ENCODE measurements at regions of chr3 and their contacts with region 1.

Region 1: GRCh38 chr3:126752303-126752842 is 48.3 kb downstream of the CHCHD6 start:
- DNase-seq: peak; percentile 63
- ATAC-seq: peak; percentile 98
- H3K4me3 ChIP-seq: no peak overlapping the region
- H3K27ac ChIP-seq: no peak overlapping the region
- H3K4me1 ChIP-seq: peaks cover 19% of the 10 kb centered on the region
- H3K27me3 ChIP-seq: no peaks in the 10 kb centered on the region; a peak in 1 of 5 replicates
- CTCF ChIP-seq: peak; percentile 97
- EP300 ChIP-seq: no peak
- POLR2A ChIP-seq: no peak
- RAD21 ChIP-seq: peak; percentile 92

Region 2: GRCh38 chr3:126494204-126494969 is 258.0 kb before region 1 on chr3:
- CTCF ChIA-PET with region 1: no interaction called
- POLR2A ChIA-PET with region 1: no interaction called
- in situ Hi-C with region 1: no loop called
- intact Hi-C with region 1: no loop called
- DNase-seq: no peak
- ATAC-seq: no peak
- H3K4me3 ChIP-seq: no peak overlapping the region
- H3K27ac ChIP-seq: no peak overlapping the region
- H3K4me1 ChIP-seq: peaks cover 28% of the 10 kb centered on the region
- H3K27me3 ChIP-seq: no peaks in the 10 kb centered on the region
- CTCF ChIP-seq: no peak
- EP300 ChIP-seq: no peak
- POLR2A ChIP-seq: no peak
- RAD21 ChIP-seq: no peak

Region 3: DNA sequence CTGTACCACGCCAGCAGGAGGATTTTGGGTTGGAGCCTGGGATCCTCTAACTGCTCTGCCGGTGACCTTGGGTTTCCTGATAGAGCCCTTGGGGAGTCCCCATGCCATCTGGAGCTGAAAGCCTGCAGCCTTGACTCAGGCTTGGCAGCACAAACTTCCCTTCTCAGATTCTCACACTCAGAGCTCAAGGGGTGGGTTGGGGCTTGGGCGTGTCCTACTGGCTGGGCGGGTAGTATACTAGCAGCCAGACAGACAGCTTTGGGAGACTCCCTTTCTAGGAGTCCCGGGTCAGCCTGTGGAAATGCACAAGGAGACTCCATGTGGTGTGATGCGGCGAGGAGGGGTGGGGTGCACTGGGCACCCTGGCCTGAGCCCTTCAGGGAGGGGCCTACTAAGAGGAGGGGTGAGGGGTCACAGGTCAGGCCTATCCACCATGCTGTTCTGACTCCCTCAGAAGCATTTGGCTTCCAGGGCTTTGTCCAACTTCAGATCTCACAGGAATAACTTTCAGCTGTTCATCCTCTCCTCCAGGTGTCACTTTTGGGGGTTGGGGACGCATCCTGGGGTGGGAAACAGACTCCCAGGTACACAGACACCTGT is 208.9 kb after region 1 on chr3:
- CTCF ChIA-PET with region 1: interaction called, 3 read pairs
- POLR2A ChIA-PET with region 1: no interaction called
- in situ Hi-C with region 1: loop called (anchors 5 kb)
- intact Hi-C with region 1: loop called (anchors 1 kb)
- DNase-seq: no peak
- ATAC-seq: no peak
- H3K4me3 ChIP-seq: no peak overlapping the region
- H3K27ac ChIP-seq: no peak overlapping the region
- H3K4me1 ChIP-seq: peaks cover 30% of the 10 kb centered on the region
- H3K27me3 ChIP-seq: no peaks in the 10 kb centered on the region
- CTCF ChIP-seq: no peak
- EP300 ChIP-seq: no peak
- POLR2A ChIP-seq: no peak
- RAD21 ChIP-seq: no peak

Region 4: GRCh38 chr3:126982471-126983175 is 230.2 kb after region 1 on chr3 and contains the start of gene PLXNA1:
- CTCF ChIA-PET with region 1: interaction called, 7 read pairs
- POLR2A ChIA-PET with region 1: no interaction called
- in situ Hi-C with region 1: no loop called
- intact Hi-C with region 1: loop called (anchors 2 kb)
- DNase-seq: peak; percentile 44
- ATAC-seq: peak; percentile 61
- H3K4me3 ChIP-seq: peak within 1 kb of the TSS; percentile 59 to 92 (median 81); a peak in 5 of 6 replicates
- H3K27ac ChIP-seq: peak within 1 kb of the TSS; percentile 55
- H3K4me1 ChIP-seq: peaks cover 39% of the 10 kb centered on the region
- H3K27me3 ChIP-seq: peaks cover 2 to 16% of the 10 kb centered on the region in 2 experiments; a peak in 3 of 5 replicates
- CTCF ChIP-seq: peak; percentile 91
- EP300 ChIP-seq: no peak
- POLR2A ChIP-seq: no peak
- RAD21 ChIP-seq: peak; percentile 81
- total RNA-seq, gene PLXNA1: 8.5 and 16.6 TPM in 2 replicates

Region 5: GRCh38 chr3:127172781-127173515 is 420.6 kb after region 1 on chr3:
- CTCF ChIA-PET with region 1: no interaction called
- POLR2A ChIA-PET with region 1: no interaction called
- in situ Hi-C with region 1: loop called (anchors 5 kb)
- intact Hi-C with region 1: loop called (anchors 5 kb)
- DNase-seq: no peak
- ATAC-seq: no peak
- H3K4me3 ChIP-seq: no peak overlapping the region
- H3K27ac ChIP-seq: no peak overlapping the region
- H3K4me1 ChIP-seq: no peaks in the 10 kb centered on the region
- H3K27me3 ChIP-seq: peaks cover 2 to 25% of the 10 kb centered on the region in 2 experiments; a peak in 3 of 5 replicates
- CTCF ChIP-seq: no peak
- EP300 ChIP-seq: no peak
- POLR2A ChIP-seq: no peak
- RAD21 ChIP-seq: no peak

Region 6: GRCh38 chr3:127304121-127304744 is 551.9 kb after region 1 on chr3:
- CTCF ChIA-PET with region 1: no interaction called
- POLR2A ChIA-PET with region 1: no interaction called
- in situ Hi-C with region 1: no loop called
- intact Hi-C with region 1: loop called (anchors 5 kb)
- DNase-seq: peak; percentile 69
- ATAC-seq: peak; percentile 96
- H3K4me3 ChIP-seq: peak overlapping the region; percentile 4 to 49 (median 18); a peak in 2 of 6 replicates
- H3K27ac ChIP-seq: no peak overlapping the region
- H3K4me1 ChIP-seq: peaks cover 11% of the 10 kb centered on the region
- H3K27me3 ChIP-seq: peaks cover 8 to 18% of the 10 kb centered on the region in 2 experiments; a peak in 3 of 5 replicates
- CTCF ChIP-seq: peak; percentile 38
- EP300 ChIP-seq: no peak
- POLR2A ChIP-seq: no peak
- RAD21 ChIP-seq: no peak

Region 7: GRCh38 chr3:127455541-127456450 is 703.4 kb after region 1 on chr3:
- CTCF ChIA-PET with region 1: interaction called, 11 read pairs
- POLR2A ChIA-PET with region 1: no interaction called
- in situ Hi-C with region 1: loop called (anchors 10 kb)
- intact Hi-C with region 1: no loop called
- DNase-seq: peak; percentile 41
- ATAC-seq: peak; percentile 99
- H3K4me3 ChIP-seq: peak overlapping the region in 1 of 3 experiments; percentile 32; a peak in 1 of 6 replicates
- H3K27ac ChIP-seq: no peak overlapping the region
- H3K4me1 ChIP-seq: no peaks in the 10 kb centered on the region
- H3K27me3 ChIP-seq: peaks cover 2 to 66% of the 10 kb centered on the region in 2 experiments; a peak in 4 of 5 replicates
- CTCF ChIP-seq: peak; percentile 88
- EP300 ChIP-seq: no peak
- POLR2A ChIP-seq: no peak
- RAD21 ChIP-seq: peak; percentile 99